Posterior cingulate gyrus (tissue), 11 donors: ENCODE measurements at regions of chr20 and their contacts with region 1.

Region 1: GRCh38 chr20:62302341-62303058 is at the start of gene ADRM1:
- DNase-seq: peak; percentile 92 to 100 (median 96)

Region 2: DNA sequence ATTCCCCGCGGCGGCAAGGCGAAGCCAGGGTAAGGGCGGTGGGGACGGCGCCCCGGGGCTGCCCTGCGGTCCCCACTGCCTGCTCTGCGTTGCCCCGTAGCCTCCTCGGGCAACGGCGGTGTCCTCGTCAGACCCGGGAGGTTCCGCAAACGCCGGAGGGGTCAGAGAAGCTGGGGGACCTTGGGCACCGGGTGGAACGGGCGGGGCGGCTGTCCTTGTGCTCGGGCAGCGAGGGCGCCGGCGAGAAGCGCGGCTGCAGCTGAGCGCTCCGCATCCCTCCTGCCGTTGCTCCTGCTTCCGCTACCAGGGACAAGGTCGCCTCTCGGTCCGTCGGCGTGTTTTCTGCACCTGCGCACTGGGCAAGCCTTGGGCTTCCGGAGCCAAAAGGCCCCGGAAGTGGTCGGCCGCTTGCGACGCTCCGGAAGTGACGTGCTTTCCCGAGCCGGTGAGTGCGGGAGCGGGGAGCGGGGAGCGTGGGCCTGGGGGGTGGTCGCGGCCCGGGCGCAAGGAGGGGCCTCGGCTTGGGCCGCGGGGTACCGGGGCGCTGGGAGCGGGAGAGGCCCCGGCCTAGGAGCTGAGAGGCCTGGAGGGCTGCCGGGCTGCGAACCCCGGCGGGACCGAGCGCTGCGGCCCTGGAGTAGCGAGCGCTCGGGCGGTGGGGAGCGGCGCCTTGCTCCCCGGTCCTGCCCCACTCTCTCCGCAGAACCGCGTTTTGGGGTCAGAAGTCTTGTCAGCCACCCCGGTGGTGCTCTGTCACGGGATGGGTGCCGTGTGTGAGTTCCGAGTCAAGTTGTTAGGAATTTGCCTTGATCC is 119.7 kb before region 1 on chr20 and contains the start of gene MTG2:
- intact Hi-C with region 1: no loop called
- DNase-seq: peak; percentile 89 to 99 (median 92)

Region 3: DNA sequence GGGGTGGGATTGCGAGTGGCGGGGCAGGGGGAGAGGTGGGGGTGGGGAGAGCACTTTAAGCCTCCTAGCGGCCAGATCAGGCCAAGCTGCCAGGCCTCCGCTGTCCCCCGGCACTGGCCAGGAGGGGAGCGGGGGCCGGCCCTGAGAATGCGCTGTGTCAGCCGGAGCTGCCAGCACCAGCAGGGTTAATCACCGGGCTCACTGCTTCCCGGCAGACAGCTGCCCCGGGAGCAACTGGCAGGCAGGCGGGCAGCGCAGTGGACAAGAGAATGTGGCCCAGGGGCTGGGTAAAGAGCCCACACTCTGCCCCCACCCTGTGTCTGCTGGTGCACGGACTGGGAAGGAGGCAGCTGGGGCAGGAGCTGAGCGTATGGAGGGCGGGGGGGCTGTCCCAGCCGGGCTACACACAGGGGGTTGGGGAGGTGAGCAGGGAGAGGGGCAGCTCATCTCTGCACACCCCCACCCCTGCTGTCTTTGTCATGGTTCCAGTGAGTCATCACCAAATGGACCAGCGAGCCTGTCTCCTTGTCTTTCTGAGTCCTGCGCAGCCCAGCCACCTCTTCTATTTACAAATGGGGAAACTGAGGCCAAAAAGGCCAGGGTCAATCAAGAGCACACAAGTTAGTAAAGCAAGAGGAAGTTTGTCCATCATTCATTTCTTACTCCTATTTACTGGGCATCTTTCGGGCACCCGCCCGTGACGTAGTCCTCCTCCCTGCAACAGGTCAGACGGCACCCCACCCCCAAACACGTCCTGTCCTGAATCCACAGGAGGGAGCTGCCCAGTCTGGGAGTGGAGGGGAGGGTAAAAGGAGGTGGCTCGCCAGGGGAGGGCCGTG is 66.7 kb after region 1 on chr20:
- intact Hi-C with region 1: loop called (anchors 5 kb)
- DNase-seq: peak in 3 of 10 donors; percentile 71 to 92 (median 86)